Posterior cingulate gyrus (tissue), 11 donors: ENCODE measurements at regions of chr11 and their contacts with region 1.

Region 1: GRCh38 chr11:119323538-119324033 is 6.7 kb upstream of the MCAM start:
- DNase-seq: peak; percentile 42 to 95 (median 84)

Region 2: GRCh38 chr11:119185981-119186634 is 137.5 kb before region 1 on chr11:
- intact Hi-C with region 1: no loop called
- DNase-seq: peak in 1 of 10 donors; percentile 59

Region 3: DNA sequence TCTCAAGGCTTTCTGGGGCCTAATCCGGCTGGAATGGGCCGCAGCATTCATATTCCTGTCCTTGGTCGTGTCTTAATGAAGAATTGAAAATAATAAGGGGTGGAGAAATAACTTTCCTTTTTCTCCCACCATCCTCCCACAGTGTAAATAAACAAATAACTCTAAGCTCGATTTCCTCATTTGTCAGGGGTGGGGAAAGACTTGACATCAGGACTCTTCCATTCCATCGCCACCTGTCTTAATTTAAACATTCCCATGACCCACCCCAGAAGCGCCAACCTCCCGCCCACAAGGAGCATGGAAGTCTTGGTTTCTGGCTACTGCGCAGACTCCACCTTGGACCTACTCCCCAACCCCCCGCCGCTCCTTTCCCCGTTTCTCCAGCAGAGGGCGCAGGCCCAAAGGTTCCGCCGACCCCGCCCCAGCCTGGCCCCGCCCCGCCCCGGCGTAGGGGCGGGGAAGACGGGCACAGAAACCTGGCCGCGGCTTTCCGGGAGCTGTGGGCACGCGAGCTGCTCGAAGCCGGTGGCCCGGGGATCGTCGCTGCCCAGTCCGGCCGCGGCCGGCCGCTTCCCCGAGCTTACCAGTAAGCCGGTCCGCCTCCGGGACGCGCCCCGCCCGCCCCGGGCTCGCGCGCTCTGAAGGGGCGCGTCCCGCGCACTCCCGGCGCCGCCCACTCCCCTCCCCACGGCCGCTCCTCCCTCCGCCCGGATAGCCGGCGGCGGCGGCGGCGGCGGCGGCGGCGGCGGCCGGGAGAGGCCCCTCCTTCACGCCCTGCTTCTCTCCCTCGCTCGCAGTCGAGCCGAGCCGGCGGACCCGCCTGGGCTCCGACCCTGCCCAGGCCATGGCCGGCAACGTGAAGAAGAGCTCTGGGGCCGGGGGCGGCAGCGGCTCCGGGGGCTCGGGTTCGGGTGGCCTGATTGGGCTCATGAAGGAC is 117.7 kb before region 1 on chr11 and contains the start of gene CBL:
- intact Hi-C with region 1: loop called (anchors 2 kb)
- DNase-seq: peak; percentile 91 to 98 (median 96)

Region 4: GRCh38 chr11:119298726-119299125 is 24.9 kb before region 1 on chr11:
- intact Hi-C with region 1: no loop called
- DNase-seq: no peak